ENCODE measurements at regions of chr10 and their contacts with region 1.

Region 1: DNA sequence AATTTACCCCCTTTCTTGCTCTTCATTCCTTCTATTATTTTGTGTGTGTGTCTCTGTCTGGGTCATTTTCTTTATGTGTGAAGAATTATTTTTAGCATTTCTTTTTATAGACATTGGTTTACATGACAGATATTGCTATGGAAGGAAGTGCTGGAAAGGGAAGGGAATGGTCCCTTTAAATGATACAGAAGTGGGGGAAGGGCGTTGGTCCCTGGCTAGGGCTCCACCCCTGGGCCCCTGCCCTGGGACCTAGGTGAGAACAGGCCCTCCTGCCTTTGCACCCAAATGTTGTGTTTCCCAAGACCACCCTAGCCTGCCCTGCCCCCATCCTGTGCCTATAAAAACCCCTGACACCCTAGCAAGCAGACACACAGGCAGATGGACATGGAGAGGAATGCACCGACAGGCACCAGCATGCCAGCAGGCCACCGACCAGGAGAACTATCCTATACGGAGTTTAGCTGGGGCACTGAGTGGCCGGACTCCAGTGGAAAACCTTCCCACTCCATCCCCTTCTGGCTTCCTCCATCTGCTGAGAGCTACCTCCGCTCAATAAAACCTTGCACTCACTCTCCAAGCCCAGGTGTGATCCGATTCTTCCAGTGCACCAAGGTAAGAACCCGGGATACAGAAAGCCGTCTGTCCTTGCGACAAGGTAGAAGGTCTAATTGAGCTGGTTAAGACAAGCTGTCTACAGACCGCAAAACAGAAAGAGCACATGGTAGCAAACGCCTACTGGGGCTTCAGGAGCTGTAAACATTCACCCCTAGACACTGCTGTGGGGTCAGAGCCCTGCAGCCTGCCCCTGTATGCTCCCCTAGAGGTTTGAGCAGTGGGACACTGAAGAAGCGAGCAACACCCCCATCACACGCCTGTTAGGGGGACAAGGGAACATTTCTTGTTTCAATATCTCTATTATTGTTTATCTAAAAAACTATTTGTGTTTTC is 515.7 kb downstream of the SORCS1 start:
- DNase-seq: no peak
- ATAC-seq: no peak
- H3K4me3 Mint-ChIP-seq: no peak overlapping the region
- H3K27ac Mint-ChIP-seq: no peak overlapping the region
- H3K4me1 Mint-ChIP-seq: no peaks in the 10 kb centered on the region
- H3K27me3 Mint-ChIP-seq: no peaks in the 10 kb centered on the region

Region 2: GRCh38 chr10:106606554-106606910 is 42.3 kb before region 1 on chr10:
- CTCF ChIA-PET with region 1: no interaction called
- POLR2A ChIA-PET with region 1: no interaction called
- intact Hi-C with region 1: loop called in 1 of 2 experiments (anchors 1 kb)
- DNase-seq: no peak
- ATAC-seq: no peak
- H3K4me3 Mint-ChIP-seq: no peak overlapping the region
- H3K27ac Mint-ChIP-seq: no peak overlapping the region
- H3K4me1 Mint-ChIP-seq: no peaks in the 10 kb centered on the region
- H3K27me3 Mint-ChIP-seq: no peaks in the 10 kb centered on the region